CD8-positive, alpha-beta T cell (primary cell): ENCODE measurements at regions of chr14 and their contacts with region 1.

Region 1: DNA sequence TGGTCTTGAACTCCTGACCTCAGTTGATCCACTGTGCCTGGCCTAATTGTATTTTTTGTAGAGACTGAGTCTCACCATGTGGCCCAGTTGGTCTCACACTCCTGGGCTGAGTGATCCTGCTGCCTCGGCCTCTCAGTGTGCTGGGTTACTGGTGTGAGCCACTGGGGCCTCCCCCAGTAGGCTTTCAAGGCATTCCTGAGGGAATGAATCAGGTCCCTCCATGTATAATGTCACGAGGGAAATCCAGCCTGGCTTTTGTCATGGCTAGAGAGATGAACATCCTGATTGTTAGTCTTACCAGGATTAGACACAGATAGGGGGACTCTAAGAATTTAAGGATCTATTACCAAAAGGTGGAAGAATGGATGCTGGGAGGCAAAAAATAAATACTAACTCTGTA is 51.9 kb downstream of the CPSF2 start:
- DNase-seq: no peak
- ATAC-seq: no peak
- H3K4me3 ChIP-seq: no peak overlapping the region
- H3K4me3 Mint-ChIP-seq: no peak overlapping the region
- H3K27ac ChIP-seq: no peak overlapping the region
- H3K27ac Mint-ChIP-seq: no peak overlapping the region
- H3K4me1 ChIP-seq: no peaks in the 10 kb centered on the region
- H3K4me1 Mint-ChIP-seq: no peaks in the 10 kb centered on the region
- H3K27me3 ChIP-seq: no peaks in the 10 kb centered on the region
- H3K27me3 Mint-ChIP-seq: no peaks in the 10 kb centered on the region
- CTCF ChIP-seq: no peak

Region 2: GRCh38 chr14:91708795-91709194 is 464.9 kb before region 1 on chr14:
- CTCF ChIA-PET with region 1: no interaction called
- POLR2A ChIA-PET with region 1: no interaction called
- intact Hi-C with region 1: loop called in 1 of 2 experiments (anchors 5 kb)
- DNase-seq: no peak
- ATAC-seq: no peak
- H3K4me3 ChIP-seq: no peak overlapping the region
- H3K4me3 Mint-ChIP-seq: no peak overlapping the region
- H3K27ac ChIP-seq: no peak overlapping the region
- H3K27ac Mint-ChIP-seq: no peak overlapping the region
- H3K4me1 ChIP-seq: no peaks in the 10 kb centered on the region
- H3K4me1 Mint-ChIP-seq: no peaks in the 10 kb centered on the region
- H3K27me3 ChIP-seq: no peaks in the 10 kb centered on the region
- H3K27me3 Mint-ChIP-seq: no peaks in the 10 kb centered on the region
- CTCF ChIP-seq: no peak

Region 3: DNA sequence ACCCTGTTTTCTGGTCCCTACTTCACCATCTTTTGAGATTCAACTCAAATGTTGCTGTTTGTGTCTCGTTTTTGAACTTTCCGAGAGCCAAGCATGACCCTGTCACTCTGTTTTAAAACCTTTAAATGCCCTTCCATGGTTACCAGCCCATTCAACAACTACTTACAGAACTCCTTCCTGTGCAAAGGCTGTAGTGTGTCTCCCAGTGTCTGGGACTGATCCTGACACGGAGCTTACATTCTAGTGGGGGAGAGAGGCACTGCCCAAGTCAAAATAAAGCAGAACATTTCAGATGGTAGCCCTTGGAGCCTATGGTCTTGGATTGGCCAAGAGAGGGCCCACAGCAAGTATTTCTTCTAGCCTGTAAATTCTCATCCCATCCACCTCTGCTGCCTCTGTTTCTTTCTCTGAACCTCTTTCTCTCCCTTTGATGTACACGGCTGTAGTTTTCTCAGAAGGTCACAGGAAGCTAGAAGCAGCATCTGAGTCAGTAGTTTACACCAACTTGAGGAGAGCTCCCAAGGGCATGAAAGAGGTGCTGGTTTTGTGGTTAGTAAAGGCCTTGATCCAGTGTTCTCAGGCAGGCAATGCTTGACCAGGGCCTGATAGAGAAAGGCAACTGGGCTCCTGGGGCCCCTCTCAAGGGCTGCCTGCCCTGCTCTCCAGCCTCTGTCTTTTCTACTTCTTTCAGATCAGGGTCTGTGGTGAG is 107.0 kb after region 1 on chr14:
- CTCF ChIA-PET with region 1: no interaction called
- POLR2A ChIA-PET with region 1: no interaction called
- intact Hi-C with region 1: no loop called
- DNase-seq: peak in 2 of 9 experiments; percentile 9 to 32
- ATAC-seq: peak; percentile 31
- H3K4me3 ChIP-seq: no peak overlapping the region
- H3K4me3 Mint-ChIP-seq: peak overlapping the region; percentile 17
- H3K27ac ChIP-seq: no peak overlapping the region
- H3K27ac Mint-ChIP-seq: peak overlapping the region; percentile 55
- H3K4me1 ChIP-seq: peaks cover 24% of the 10 kb centered on the region
- H3K4me1 Mint-ChIP-seq: peaks cover 23% of the 10 kb centered on the region
- H3K27me3 ChIP-seq: no peaks in the 10 kb centered on the region
- H3K27me3 Mint-ChIP-seq: peaks cover 2% of the 10 kb centered on the region
- CTCF ChIP-seq: no peak